Left cardiac atrium (tissue), 4 donors: ENCODE measurements at regions of chr4 and their contacts with region 1.

Region 1: GRCh38 chr4:166165829-166166420 is 292.9 kb downstream of the TLL1 start:
- DNase-seq: no peak
- ATAC-seq: peak; percentile 78 to 83

Region 2: GRCh38 chr4:167109859-167110258 is 943.9 kb after region 1 on chr4:
- intact Hi-C with region 1: no loop called
- DNase-seq: no peak
- ATAC-seq: no peak

Region 3: DNA sequence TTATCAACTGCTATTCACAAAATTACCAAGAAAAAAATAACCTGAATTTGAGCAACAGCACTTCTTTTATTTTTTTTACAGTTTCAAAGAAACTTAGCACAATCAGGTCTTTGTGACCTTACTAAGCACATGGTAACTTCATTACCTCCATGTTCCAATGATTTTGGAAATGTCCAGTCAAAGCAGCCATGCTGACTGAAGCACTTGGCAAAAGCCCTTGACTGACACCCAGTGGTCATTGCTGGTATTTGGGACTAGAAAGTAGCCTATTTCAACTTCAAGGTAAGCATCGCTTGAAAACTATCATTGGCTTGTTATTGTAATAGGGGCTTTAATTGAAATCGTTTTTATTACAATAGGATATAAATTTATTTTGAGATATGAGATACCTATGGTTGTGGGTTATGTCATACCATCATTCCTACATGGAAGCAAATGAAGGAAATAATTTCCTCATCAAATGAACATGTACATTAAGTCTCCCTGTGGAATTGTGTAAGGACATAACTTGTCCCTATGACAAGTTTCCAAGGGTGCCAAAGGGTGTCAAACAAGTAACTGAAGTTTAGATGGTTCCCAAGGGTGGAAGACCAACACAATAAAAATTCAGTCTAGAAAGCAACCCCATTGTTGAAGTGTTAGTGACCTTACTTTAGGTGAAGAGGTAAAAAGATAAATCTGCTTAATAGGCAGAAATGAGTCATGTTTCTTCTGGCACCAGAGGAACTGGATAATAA is 1911.2 kb after region 1 on chr4:
- intact Hi-C with region 1: loop called in 1 of 2 experiments (anchors 5 kb)
- DNase-seq: peak; percentile 28
- ATAC-seq: peak in 1 of 2 donors; percentile 41

Region 4: GRCh38 chr4:168153596-168154440 is 1987.9 kb after region 1 on chr4:
- intact Hi-C with region 1: loop called in 1 of 2 experiments (anchors 10 kb)
- DNase-seq: peak; percentile 78
- ATAC-seq: peak; percentile 53 to 73